PC-9 (cell line): ENCODE measurements at regions of chr18 and their contacts with region 1.

Region 1: DNA sequence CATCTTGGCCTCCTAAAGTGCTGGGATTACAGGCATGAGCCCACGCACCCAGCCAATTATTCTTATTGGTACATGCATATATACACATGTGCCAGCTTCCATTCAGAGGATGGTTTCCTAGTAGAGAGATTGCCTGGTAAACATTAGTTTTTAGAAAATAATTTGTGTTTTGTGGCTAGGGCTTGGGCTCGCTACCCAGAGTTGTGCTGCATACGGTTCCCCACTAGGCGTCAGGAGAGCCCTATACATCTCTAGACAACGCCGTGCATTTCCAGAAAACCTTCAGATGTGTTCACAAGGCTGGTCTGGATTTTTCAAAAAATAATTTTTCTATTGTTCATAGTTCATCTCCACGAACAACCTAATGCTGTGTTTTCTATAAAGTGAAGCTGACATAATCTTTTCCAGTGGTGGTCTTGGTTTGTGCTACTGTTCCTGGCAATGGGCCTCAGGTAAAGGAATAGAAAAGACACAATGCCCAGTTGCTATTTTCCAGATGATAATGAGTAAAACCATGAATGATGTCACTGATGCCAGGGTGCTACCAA is 14.7 kb upstream of the AFG3L2 start:
- DNase-seq: peak in 1 of 2 experiments; percentile 64
- H3K4me3 ChIP-seq: no peak overlapping the region
- H3K27ac ChIP-seq: no peak overlapping the region
- H3K4me1 ChIP-seq: peaks cover 5% of the 10 kb centered on the region
- H3K27me3 ChIP-seq: no peaks in the 10 kb centered on the region
- CTCF ChIP-seq: peak; percentile 90

Region 2: DNA sequence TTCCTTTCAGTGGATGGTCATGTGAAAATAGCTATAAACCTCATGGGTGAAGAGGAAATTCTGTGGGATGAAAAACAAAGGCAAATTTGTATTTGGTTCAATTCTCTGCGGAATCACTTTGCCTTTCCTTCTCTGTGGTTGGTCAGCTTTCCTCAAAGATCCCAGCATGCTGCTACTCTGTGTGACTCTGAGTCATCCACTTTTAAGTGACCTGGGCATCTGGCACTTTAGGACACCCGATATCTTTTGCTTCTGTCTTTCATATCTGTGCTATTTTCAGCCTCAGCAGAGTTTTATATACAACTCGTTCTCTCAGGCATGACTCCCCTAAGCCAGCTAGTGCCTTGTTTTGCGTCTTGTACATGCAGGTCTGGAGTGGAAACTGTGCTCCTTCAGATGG is 1025.3 kb before region 1 on chr18:
- CTCF ChIA-PET with region 1: no interaction called
- POLR2A ChIA-PET with region 1: interaction called, 11 read pairs
- intact Hi-C with region 1: no loop called
- DNase-seq: no peak
- H3K4me3 ChIP-seq: no peak overlapping the region
- H3K27ac ChIP-seq: no peak overlapping the region
- H3K4me1 ChIP-seq: no peaks in the 10 kb centered on the region
- H3K27me3 ChIP-seq: peaks cover 13% of the 10 kb centered on the region; the same call in 1 of the 2 replicates
- CTCF ChIP-seq: no peak

Region 3: DNA sequence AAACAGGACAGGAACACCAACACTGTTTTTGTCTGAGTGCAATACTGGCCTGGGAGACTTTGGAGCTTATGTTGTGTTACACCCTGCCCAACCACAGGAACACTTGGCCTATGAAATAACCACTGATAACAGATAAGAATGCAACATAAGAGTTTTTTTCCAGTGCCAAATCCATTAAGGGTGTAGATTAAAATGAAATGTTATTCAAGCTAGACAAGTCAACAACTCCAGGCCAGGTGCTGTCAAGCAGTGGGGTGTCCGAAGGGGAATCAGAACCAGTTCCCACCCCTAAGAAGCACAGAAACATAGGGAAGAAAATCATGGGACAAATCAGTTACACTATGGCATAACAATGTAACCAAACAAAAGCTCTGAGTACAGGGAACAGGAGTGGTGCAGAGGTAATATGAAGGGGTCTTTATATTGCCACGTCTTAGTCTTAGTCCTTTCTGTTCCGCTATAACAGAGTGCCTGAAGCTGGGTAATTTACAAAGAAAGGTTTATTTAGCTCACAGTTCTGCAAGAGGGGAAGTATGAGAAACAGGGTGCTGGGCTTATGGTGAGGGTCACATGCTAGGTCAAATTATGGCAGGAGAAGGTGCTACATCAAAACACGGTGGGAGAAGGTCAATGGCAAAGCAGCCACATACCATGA is 18.4 kb before region 1 on chr18:
- CTCF ChIA-PET with region 1: no interaction called
- POLR2A ChIA-PET with region 1: no interaction called
- intact Hi-C with region 1: no loop called
- DNase-seq: no peak
- H3K4me3 ChIP-seq: no peak overlapping the region
- H3K27ac ChIP-seq: no peak overlapping the region
- H3K4me1 ChIP-seq: peaks cover 40% of the 10 kb centered on the region
- H3K27me3 ChIP-seq: no peaks in the 10 kb centered on the region
- CTCF ChIP-seq: no peak

Region 4: DNA sequence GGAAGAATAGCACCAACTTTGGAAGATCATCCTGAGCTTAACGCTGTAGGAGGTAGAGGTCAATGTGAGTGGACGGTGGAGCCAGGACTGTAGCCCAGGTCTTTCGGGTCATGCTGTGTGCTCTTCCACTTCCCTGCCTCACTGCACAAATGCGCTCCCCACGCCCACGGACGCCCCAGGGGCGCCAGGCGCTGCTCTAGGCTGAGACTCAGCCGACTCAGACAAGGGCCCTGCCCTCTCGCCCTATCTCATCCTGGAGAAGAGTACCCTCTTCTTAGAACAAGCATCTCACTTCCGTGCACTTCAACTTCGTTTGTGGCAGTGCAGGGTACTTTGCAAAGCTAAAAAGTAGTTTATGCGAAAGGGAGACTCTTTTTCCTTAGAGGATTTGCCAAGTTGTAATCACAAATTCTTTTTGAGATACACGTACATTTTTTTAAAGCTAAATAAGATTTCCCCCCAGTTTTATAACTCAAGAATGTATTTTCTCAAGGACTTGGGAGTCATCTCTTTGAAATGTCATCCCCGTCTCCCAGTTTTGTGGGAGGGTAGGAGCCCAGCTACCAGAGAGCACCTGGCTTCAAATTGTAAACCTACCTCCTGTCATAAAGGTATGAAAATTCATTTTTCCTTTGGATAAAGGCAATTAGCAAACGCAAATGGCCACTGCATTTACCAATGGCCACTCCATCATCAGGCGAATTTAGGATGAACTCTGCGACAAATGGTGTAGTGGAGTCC is 14.8 kb after region 1 on chr18:
- CTCF ChIA-PET with region 1: interaction called, 6 read pairs
- POLR2A ChIA-PET with region 1: interaction called, 15 read pairs
- intact Hi-C with region 1: no loop called
- DNase-seq: no peak
- H3K4me3 ChIP-seq: no peak overlapping the region
- H3K27ac ChIP-seq: no peak overlapping the region
- H3K4me1 ChIP-seq: peaks cover 46% of the 10 kb centered on the region
- H3K27me3 ChIP-seq: no peaks in the 10 kb centered on the region
- CTCF ChIP-seq: no peak

Region 5: DNA sequence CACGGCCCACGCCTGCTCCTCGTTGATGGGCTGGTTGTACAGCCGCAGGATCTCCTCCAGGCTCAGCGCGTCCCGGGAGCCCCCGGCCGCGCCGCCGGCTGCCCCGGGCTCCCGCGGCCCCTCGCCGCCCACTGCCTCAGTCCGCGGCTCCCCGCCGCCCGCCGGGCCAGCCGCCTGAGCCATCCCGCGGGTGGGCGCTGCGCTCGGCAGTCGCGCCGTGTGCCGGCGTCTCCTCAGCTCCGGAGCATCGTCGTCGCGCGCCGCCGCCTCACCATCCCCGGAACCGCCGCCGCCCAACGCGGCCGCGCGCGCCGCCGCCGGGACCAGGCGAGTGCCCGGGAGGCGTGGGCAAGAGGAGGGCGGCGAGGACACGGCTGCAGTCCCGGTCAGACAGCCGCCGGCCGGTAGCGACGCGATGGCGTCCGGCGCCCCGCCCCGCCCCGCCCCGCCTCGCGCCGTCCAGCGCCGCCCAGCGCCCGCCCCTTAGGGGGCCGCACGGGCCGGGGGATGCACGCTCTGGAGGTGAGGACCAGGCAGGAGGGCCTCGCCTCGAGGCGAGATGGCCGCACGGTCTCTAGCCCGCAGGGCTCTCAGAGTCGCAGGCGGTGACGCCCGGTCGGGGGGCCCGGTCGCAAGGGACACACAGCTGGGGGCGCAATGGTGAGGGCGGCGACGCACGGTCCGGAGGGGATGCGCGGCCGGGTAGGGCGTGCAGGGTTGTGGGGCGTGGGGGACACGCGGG is 266.2 kb after region 1 on chr18 and contains the start of gene SPIRE1:
- CTCF ChIA-PET with region 1: no interaction called
- POLR2A ChIA-PET with region 1: interaction called, 3 read pairs
- intact Hi-C with region 1: loop called (anchors 1 kb)
- DNase-seq: peak in 1 of 2 experiments; percentile 79
- H3K4me3 ChIP-seq: peak within 1 kb of the TSS; percentile 86
- H3K27ac ChIP-seq: no peak within 1 kb of the TSS
- H3K4me1 ChIP-seq: peaks cover 29% of the 10 kb centered on the region
- H3K27me3 ChIP-seq: no peaks in the 10 kb centered on the region
- CTCF ChIP-seq: no peak
- total RNA-seq, gene SPIRE1: 26.1 and 36.4 TPM in 2 replicates

Region 6: DNA sequence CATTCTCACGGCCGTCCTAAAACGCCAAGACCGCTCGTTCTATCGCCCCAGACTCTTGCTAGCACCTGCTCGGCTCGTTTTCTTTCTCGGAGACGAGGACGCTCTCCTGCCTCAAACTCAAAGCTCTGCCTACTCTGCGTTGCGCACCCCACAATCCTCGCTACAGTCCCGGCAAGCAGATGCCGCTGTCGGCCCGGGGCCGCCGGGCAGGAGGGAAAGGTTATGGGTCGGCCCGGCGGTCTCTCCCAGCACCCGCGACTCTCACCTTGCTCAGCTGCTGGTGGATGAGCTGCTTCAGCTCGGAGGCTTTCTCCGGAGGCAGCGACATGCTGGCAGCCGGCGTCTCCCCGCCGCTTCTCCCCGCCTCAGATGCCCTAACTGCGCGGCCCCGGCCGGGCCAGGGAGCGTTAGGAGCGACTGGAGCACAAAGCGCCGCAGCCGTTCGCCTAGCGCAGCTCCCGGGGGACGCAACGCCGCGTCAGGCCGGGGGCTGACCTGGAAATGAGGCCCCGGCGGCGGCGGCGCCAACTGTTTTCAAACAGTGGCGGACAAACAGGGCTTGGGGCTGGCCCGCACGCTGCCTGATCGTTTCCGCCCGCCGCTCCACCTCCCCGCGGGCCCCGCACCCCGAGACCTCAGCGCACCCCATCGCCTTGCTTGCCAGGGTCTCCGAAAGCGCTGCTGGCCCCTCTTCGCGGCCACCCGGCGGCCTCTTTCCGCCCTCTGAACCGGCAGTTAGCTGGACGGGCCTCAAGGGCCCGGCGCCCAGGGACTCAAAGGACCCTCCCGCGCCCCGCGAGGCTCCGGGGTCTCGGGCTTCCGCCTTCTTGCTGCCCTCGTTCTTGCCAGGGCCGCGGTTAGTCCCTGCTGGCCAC is 310.8 kb after region 1 on chr18 and contains the starts of genes CEP76 and PSMG2:
- CTCF ChIA-PET with region 1: no interaction called
- POLR2A ChIA-PET with region 1: no interaction called
- intact Hi-C with region 1: loop called (anchors 1 kb)
- DNase-seq: peak; percentile 61 to 90
- H3K4me3 ChIP-seq: peak within 1 kb of the TSS; percentile 81
- H3K27ac ChIP-seq: peak within 1 kb of the TSS; percentile 92
- H3K4me1 ChIP-seq: peaks cover 31% of the 10 kb centered on the region
- H3K27me3 ChIP-seq: no peaks in the 10 kb centered on the region
- CTCF ChIP-seq: no peak
- total RNA-seq, gene CEP76: 14.5 and 15.1 TPM in 2 replicates
- total RNA-seq, gene PSMG2: 107 and 123 TPM in 2 replicates

Region 7: GRCh38 chr18:12934454-12935071 is 542.9 kb after region 1 on chr18:
- CTCF ChIA-PET with region 1: no interaction called
- POLR2A ChIA-PET with region 1: no interaction called
- intact Hi-C with region 1: loop called (anchors 1 kb)
- DNase-seq: peak; percentile 75 to 86
- H3K4me3 ChIP-seq: no peak overlapping the region
- H3K27ac ChIP-seq: no peak overlapping the region
- H3K4me1 ChIP-seq: peaks cover 11% of the 10 kb centered on the region
- H3K27me3 ChIP-seq: no peaks in the 10 kb centered on the region
- CTCF ChIP-seq: peak; percentile 94

Region 8: DNA sequence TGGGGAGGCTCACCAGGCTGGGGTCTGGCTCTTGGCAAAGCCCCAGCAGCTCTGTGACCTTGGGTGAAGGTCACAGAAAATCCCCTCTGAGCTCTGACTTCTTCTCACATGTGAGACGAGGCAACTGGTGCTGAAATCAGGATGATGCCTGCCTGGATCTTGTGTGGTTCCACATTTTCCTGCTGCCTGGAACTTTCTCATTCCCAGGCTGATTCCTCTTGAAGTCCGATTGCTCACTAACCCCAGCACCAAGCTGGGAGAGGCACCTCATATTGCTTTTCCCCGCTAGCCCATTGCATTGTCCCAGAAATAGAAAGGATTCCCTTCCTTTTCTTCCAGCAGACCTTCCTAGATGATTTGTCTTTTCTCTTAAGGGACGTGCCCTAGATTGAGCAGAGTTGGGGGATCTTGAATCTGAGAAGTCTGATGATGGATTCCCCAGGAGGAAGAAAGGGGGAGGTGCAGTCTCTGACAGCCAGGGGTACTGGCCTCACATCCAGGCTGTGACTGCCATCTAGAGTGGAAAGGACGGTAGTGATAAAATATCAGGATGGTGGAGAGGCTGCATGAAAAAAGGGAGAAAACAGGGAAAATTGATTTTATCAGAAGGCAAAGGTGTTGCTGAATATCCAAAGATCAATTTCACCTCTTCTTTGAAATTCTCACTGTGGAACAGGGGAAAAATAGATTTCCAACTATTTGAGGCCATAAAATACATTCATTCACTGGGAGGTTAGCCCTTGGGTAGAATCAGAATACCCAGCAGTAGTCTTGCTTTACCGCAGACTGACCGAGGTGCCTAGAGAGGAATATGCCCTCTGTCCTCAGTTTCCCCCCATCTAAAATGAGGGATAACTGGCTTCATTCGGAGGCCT is 1238.4 kb after region 1 on chr18:
- CTCF ChIA-PET with region 1: no interaction called
- POLR2A ChIA-PET with region 1: no interaction called
- intact Hi-C with region 1: loop called (anchors 5 kb)
- DNase-seq: peak; percentile 37 to 50
- H3K4me3 ChIP-seq: no peak overlapping the region
- H3K27ac ChIP-seq: no peak overlapping the region
- H3K4me1 ChIP-seq: no peaks in the 10 kb centered on the region
- H3K27me3 ChIP-seq: peaks cover 62% of the 10 kb centered on the region
- CTCF ChIP-seq: peak; percentile 77